Mammary epithelial cell (primary cell): ENCODE measurements at regions of chr10 and their contacts with region 1.

Region 1: DNA sequence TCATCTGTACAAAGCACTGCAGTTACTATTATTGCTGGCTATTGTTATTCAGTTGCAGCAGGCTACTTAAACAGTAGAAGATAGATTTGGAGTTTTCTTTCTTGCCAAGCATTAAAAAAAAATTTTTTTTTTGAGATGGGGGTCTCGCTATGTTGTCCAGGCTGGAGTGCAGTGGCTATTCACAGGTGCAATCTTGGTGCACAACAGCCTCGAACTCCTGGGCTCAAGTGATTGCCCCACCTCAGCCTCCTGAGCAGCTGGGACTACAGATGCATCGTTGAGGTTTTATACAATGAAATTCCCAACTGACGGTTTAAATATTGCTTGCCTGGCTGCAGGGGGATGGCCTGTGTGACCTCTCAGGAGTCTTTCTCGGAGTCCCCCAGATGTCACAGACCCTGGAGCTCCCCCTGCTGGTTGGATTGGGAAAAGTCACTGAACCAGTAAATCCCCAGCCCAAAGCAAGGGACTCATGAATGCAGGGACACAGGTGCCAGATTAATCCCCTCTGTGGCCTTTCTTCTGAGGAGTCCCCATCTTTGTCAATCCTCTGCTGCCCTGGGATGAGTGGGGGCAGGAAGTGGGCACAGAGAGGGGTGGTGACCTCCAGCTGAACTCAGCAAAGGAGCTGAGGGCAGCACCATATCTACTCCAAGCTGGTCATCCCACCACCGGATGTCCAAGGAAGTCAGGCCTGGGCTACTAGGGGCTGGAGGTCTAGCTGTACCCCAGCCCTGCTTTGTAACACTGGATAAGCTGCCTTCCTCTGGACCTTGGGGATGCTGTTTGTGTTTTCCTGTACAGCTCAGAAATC is 149.6 kb downstream of the C10orf105 start:
- DNase-seq: peak; percentile 35
- H3K4me3 ChIP-seq: no peak overlapping the region
- H3K27ac ChIP-seq: no peak overlapping the region
- H3K4me1 ChIP-seq: no peaks in the 10 kb centered on the region
- H3K27me3 ChIP-seq: no peaks in the 10 kb centered on the region
- CTCF ChIP-seq: peak; percentile 71 to 87

Region 2: GRCh38 chr10:71319042-71319799 is 250.8 kb before region 1 on chr10 and contains the start of gene SLC29A3:
- CTCF ChIA-PET with region 1: interaction called, 3 read pairs
- dilution Hi-C with region 1: loop called (anchors 25 kb)
- in situ Hi-C with region 1: loop called in 1 of 2 experiments (anchors 5 kb)
- intact Hi-C with region 1: loop called (anchors 1 kb)
- DNase-seq: peak; percentile 74
- H3K4me3 ChIP-seq: peak within 1 kb of the TSS; percentile 50 to 57 (median 55)
- H3K27ac ChIP-seq: no peak within 1 kb of the TSS
- H3K4me1 ChIP-seq: peaks cover 6% of the 10 kb centered on the region
- H3K27me3 ChIP-seq: no peaks in the 10 kb centered on the region
- CTCF ChIP-seq: peak; percentile 54 to 90
- total RNA-seq, gene SLC29A3: 3.5 to 8.2 TPM

Region 3: DNA sequence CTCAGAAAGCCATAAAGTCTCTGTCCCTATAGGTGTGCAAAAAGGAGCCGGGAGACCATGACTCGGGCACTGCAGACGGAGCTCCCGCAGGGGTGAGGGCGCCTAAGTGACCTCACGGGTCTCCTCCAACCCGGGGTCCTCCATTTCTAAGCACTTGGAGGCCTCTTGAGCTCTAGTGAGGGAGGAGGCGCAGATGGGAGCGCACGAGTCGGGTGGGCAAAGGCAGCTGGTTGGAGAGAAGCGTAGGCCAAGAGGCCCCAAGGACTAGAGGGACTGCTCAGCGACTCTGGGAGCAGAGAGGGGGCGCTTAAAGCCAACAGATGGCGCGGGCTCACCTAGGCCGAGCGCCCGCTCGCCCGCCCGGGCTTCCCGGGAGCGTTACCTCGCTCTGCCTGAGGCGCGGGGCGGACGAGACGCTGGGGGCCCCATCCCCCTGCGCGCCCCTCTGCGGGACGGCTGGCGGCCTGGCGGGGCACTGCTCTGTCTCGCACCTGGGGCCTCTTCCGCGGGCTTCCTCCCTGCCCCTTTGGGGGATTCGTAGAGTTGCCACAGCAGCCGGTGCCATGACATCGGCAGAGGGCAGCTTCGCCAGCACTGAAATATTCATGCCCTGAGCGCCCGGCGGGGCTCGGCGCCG is 173.8 kb before region 1 on chr10:
- CTCF ChIA-PET with region 1: interaction called, 3 read pairs
- dilution Hi-C with region 1: no loop called
- in situ Hi-C with region 1: loop called in 1 of 2 experiments (anchors 10 kb)
- intact Hi-C with region 1: no loop called
- DNase-seq: no peak
- H3K4me3 ChIP-seq: no peak overlapping the region
- H3K27ac ChIP-seq: no peak overlapping the region
- H3K4me1 ChIP-seq: peaks cover 12% of the 10 kb centered on the region
- H3K27me3 ChIP-seq: peaks cover 26% of the 10 kb centered on the region
- CTCF ChIP-seq: peak in 1 of 2 donors; percentile 35

Region 4: DNA sequence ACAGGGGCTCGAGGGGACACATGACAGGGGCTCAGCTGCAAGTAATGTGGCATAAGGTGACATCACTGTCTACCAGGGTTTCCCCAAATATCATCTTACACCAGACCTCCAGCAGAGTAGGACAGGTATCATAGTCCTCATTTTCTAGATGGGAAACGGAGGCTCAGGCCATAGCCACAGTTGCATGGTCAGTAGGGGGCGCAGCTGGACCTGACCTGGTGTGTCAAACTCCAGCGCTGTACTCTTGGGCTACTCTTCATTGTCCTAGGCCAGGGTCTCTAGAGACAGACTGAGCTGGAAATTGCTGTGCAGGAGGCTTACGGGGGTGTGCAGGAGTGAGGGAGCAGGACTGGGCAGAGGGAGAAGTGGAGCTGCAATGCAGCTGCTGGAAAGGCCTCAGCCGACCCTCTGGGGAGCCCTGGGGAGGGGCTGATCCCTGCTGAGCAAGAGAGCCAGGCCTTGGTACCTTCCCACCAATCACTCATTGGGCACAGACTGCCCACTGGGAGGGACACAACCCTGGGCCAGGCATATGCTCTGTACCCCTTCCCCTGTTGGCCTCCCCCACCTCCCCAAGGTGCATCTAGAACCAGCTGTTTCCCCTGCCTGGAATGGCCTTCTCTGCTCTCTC is 83.4 kb before region 1 on chr10:
- CTCF ChIA-PET with region 1: no interaction called
- dilution Hi-C with region 1: no loop called
- in situ Hi-C with region 1: no loop called
- intact Hi-C with region 1: loop called (anchors 1 kb)
- DNase-seq: peak; percentile 19
- H3K4me3 ChIP-seq: no peak overlapping the region
- H3K27ac ChIP-seq: no peak overlapping the region
- H3K4me1 ChIP-seq: no peaks in the 10 kb centered on the region
- H3K27me3 ChIP-seq: no peaks in the 10 kb centered on the region
- CTCF ChIP-seq: peak; percentile 63 to 82

Region 5: GRCh38 chr10:71501402-71501801 is 68.6 kb before region 1 on chr10:
- CTCF ChIA-PET with region 1: no interaction called
- dilution Hi-C with region 1: no loop called
- in situ Hi-C with region 1: no loop called
- intact Hi-C with region 1: no loop called
- DNase-seq: no peak
- H3K4me3 ChIP-seq: no peak overlapping the region
- H3K27ac ChIP-seq: no peak overlapping the region
- H3K4me1 ChIP-seq: no peaks in the 10 kb centered on the region
- H3K27me3 ChIP-seq: no peaks in the 10 kb centered on the region
- CTCF ChIP-seq: no peak

Region 6: DNA sequence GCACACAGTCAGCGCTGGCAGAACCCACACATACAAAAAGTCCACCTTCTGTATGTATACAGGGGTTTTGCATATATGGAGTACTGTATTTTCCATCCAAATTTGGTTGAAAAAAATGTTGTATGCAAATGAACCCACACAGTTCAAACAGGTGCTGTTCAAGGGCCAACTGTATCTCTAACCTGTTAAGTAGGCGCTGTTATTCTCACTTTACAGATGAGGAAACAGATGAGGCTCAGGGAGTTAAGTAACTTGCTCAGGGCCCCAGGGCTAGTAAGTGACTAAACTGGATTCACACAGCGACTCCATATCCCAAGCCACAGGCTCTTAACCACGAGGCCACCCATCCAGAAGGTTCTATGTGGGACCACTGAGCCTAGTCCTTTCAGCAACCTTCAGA is 79.7 kb after region 1 on chr10:
- CTCF ChIA-PET with region 1: no interaction called
- dilution Hi-C with region 1: loop called (anchors 5 kb)
- in situ Hi-C with region 1: no loop called
- intact Hi-C with region 1: no loop called
- DNase-seq: peak; percentile 3
- H3K4me3 ChIP-seq: no peak overlapping the region
- H3K27ac ChIP-seq: no peak overlapping the region
- H3K4me1 ChIP-seq: no peaks in the 10 kb centered on the region
- H3K27me3 ChIP-seq: no peaks in the 10 kb centered on the region
- CTCF ChIP-seq: no peak

Region 7: GRCh38 chr10:72069751-72070526 is 500.0 kb after region 1 on chr10:
- CTCF ChIA-PET with region 1: no interaction called
- dilution Hi-C with region 1: no loop called
- in situ Hi-C with region 1: no loop called
- intact Hi-C with region 1: no loop called
- DNase-seq: no peak
- H3K4me3 ChIP-seq: no peak overlapping the region
- H3K27ac ChIP-seq: no peak overlapping the region
- H3K4me1 ChIP-seq: no peaks in the 10 kb centered on the region
- H3K27me3 ChIP-seq: no peaks in the 10 kb centered on the region
- CTCF ChIP-seq: peak in 1 of 2 donors; percentile 30